ENCODE measurements at regions of chr5 and their contacts with region 1.

Region 1: DNA sequence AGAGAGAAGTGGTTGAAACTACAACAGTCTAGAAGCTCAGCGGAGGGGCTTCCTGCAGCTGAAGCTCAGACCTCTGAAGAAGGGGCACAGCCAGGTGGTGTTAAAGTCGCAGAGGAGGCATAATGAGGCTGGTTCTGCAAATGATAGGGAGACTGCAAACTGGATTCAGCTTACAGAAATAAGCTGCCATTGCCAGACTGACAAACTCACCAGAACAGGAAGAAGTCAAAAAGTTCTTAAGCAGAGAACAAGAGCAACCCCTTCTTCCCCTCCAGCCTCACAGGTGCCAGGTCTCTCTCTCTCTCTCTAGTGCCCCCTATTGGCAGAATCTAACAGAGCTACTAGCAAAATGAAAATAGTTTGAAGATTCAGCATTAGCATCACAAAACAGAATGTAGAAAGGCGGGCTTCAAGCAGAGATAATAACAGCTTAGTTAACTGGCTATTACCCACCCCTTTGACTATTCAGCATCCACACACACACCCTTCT is 76.7 kb downstream of the GRAMD2B start:
- DNase-seq: no peak
- ATAC-seq: no peak
- H3K4me3 ChIP-seq: no peak overlapping the region
- H3K27ac ChIP-seq: no peak overlapping the region
- H3K4me1 ChIP-seq: peaks cover 0 to 20% (median 13%) of the 10 kb centered on the region in 12 donors
- H3K27me3 ChIP-seq: no peaks in the 10 kb centered on the region
- CTCF ChIP-seq: peak; percentile 19 to 63 (median 44)
- POLR2A ChIP-seq: no peak

Region 2: GRCh38 chr5:126100767-126101166 is 399.1 kb before region 1 on chr5:
- intact Hi-C with region 1: no loop called
- DNase-seq: no peak
- ATAC-seq: no peak
- H3K4me3 ChIP-seq: no peak overlapping the region
- H3K27ac ChIP-seq: no peak overlapping the region
- H3K4me1 ChIP-seq: no peaks in the 10 kb centered on the region
- H3K27me3 ChIP-seq: no peaks in the 10 kb centered on the region
- CTCF ChIP-seq: peak in 5 of 12 donors; percentile 12 to 53 (median 24)
- POLR2A ChIP-seq: no peak

Region 3: DNA sequence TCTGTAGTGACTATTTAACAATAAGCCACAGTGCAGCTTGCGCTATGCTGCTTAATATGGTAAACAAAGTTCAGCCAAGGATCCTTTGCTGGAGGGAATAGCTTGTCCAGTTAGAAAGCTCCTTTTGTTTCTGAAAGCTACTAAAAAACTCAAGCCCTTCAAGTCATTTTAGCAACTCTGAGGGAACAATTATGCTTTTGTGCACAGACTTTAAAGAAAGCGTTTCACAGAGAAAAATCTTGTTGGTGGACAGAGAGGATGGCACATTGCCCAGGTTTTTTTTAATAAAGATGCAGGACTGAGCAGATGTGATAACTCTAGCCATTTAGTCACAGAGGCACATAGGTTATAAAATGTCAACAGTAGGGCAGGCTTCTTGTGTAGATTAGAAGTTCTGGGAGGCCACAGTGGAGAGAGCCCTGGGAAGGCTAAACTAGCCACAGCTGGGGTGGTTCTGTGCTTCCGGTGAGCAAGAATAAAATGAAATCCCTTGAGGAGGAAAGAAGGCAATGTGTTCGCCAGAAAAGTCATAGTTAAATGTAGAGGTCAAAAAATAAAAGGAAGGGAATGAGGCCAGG is 31.7 kb after region 1 on chr5:
- intact Hi-C with region 1: loop called in 5 of 10 experiments (anchors 1 to 5 kb)
- DNase-seq: peak in 3 of 5 donors; percentile 16 to 45 (median 34)
- ATAC-seq: peak in 3 of 4 donors; percentile 75 to 89 (median 86)
- H3K4me3 ChIP-seq: no peak overlapping the region
- H3K27ac ChIP-seq: peak overlapping the region in 11 of 12 donors; percentile 16 to 72 (median 52)
- H3K4me1 ChIP-seq: peaks cover 0 to 16% (median 8%) of the 10 kb centered on the region in 12 donors
- H3K27me3 ChIP-seq: no peaks in the 10 kb centered on the region
- CTCF ChIP-seq: no peak
- POLR2A ChIP-seq: no peak

Region 4: GRCh38 chr5:126536874-126537273 is 37.0 kb after region 1 on chr5:
- intact Hi-C with region 1: loop called in 5 of 10 experiments (anchors 5 kb)
- DNase-seq: no peak
- ATAC-seq: no peak
- H3K4me3 ChIP-seq: no peak overlapping the region
- H3K27ac ChIP-seq: peak overlapping the region in 1 of 12 donors; percentile 22
- H3K4me1 ChIP-seq: peaks cover 0 to 16% (median 5%) of the 10 kb centered on the region in 12 donors
- H3K27me3 ChIP-seq: no peaks in the 10 kb centered on the region
- CTCF ChIP-seq: no peak
- POLR2A ChIP-seq: no peak